WTC11 (cell line): ENCODE measurements at regions of chr1 and their contacts with region 1.

Region 1: DNA sequence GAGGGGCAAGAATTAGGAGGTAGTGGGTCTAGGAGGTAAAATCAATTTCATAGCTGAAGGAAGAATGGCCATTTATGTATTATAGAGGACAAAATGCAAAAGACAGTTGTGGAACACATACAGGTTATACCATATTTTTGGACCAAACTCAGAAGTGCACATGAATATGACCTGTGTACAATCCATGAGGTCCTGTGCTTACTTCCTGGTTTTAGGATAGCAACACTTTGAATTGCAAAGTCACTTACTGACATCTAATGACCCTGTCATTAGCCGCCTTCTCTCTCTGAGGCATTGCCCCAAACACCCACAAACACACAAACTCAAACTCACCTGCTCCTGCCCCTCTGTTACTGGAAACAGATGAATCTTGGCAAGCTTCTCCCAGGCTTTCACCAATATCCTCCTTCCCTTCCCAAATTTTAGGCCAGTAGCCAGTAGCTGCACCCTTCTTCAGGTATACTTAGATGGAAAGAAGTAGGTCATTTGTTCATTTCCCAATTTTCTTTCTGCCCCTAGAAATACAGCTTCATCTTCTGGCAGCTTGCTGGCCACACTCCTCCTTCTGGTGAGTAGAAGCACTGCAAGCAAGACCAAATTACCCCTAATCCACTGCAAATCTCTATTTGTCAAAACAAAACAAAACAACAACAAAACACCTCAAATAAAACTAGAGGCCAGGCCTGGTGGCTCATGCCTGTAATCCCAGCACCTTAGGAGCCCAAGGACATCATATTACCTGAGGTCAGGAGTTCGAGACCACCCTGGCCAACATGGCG is 13.7 kb upstream of the RPL5 start:
- DNase-seq: peak; percentile 20
- ATAC-seq: peak; percentile 80
- H3K4me3 Mint-ChIP-seq: no peak overlapping the region
- H3K27ac Mint-ChIP-seq: peak overlapping the region; percentile 44; the same call in 1 of the 2 replicates
- H3K4me1 Mint-ChIP-seq: peaks cover 2% of the 10 kb centered on the region; the same call in 1 of the 2 replicates
- H3K27me3 Mint-ChIP-seq: no peaks in the 10 kb centered on the region
- CTCF ChIP-seq: peak; percentile 40

Region 2: DNA sequence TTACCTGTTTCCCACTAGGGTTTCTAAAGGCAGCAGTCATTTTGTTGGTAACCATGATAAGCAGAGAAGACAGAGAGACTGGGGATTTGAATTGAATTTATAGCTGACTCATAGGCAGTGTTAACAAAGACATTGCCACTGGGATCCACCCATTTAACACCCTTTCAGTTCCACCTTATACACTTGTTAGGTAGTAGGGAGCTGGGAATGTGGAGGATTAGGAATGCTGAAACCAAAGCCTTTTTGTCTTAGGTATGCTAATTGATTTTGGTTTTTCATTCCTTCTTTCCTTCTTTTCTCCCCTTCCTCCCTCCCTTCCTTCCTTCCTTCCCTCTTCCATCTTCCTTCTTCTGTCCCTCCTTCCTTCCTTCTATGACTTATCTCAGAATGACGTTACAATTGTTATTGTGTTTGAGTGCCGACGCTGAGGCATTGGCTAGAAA is 25.8 kb before region 1 on chr1:
- CTCF ChIA-PET with region 1: interaction called, 11 read pairs
- POLR2A ChIA-PET with region 1: no interaction called
- DNase-seq: no peak
- ATAC-seq: peak; percentile 88
- H3K4me3 Mint-ChIP-seq: no peak overlapping the region
- H3K27ac Mint-ChIP-seq: no peak overlapping the region
- H3K4me1 Mint-ChIP-seq: peaks cover 22% of the 10 kb centered on the region
- H3K27me3 Mint-ChIP-seq: peaks cover 4% of the 10 kb centered on the region
- CTCF ChIP-seq: no peak

Region 3: DNA sequence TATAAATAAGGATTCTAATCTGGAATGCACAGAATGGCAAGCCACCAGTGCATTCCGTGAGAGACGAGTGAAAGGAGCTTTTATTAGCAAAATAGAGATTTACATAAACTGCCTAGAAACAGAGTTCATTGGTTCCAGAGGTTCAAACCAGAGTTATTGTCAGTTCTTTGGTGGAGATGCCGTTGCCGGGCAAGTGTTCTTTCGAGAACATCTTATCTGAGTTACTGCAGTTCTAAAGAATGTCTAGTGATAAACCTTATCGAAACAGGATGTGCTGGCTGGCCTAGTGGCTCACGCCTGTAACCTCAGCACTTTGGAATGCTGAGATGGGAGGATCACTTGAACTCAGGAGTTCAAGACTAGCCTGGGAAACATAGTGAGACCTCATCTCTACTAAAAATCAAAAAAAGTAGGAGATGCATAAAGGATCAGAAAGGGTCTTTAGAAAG is 13.4 kb before region 1 on chr1:
- CTCF ChIA-PET with region 1: interaction called, 14 read pairs
- POLR2A ChIA-PET with region 1: no interaction called
- DNase-seq: peak; percentile 27
- ATAC-seq: peak; percentile 84
- H3K4me3 Mint-ChIP-seq: no peak overlapping the region
- H3K27ac Mint-ChIP-seq: no peak overlapping the region
- H3K4me1 Mint-ChIP-seq: no peaks in the 10 kb centered on the region
- H3K27me3 Mint-ChIP-seq: no peaks in the 10 kb centered on the region
- CTCF ChIP-seq: no peak